ENCODE measurements at regions of chrX and their contacts with region 1.

Region 1: GRCh38 chrX:118595501-118596042 is 100.0 kb downstream of the DOCK11 start:
- DNase-seq: no peak
- H3K4me3 ChIP-seq: no peak overlapping the region
- H3K27ac ChIP-seq: no peak overlapping the region
- H3K4me1 ChIP-seq: no peaks in the 10 kb centered on the region
- H3K27me3 ChIP-seq: no peaks in the 10 kb centered on the region
- CTCF ChIP-seq: no peak
- EP300 ChIP-seq: no peak
- POLR2A ChIP-seq: no peak

Region 2: GRCh38 chrX:117510453-117510852 is 1085.1 kb before region 1 on chrX:
- intact Hi-C with region 1: no loop called
- DNase-seq: peak in 1 of 2 donors; percentile 7
- H3K4me3 ChIP-seq: no peak overlapping the region
- H3K27ac ChIP-seq: no peak overlapping the region
- H3K4me1 ChIP-seq: no peaks in the 10 kb centered on the region
- H3K27me3 ChIP-seq: no peaks in the 10 kb centered on the region
- CTCF ChIP-seq: no peak
- EP300 ChIP-seq: no peak
- POLR2A ChIP-seq: no peak

Region 3: GRCh38 chrX:118459494-118459893 is 136.1 kb before region 1 on chrX:
- intact Hi-C with region 1: loop called (anchors 10 kb)
- DNase-seq: peak in 1 of 2 donors; percentile 68
- H3K4me3 ChIP-seq: no peak overlapping the region
- H3K27ac ChIP-seq: no peak overlapping the region
- H3K4me1 ChIP-seq: no peaks in the 10 kb centered on the region
- H3K27me3 ChIP-seq: no peaks in the 10 kb centered on the region
- CTCF ChIP-seq: peak in 4 of 7 experiments; percentile 12 to 44 (median 38)
- EP300 ChIP-seq: no peak
- POLR2A ChIP-seq: no peak

Region 4: DNA sequence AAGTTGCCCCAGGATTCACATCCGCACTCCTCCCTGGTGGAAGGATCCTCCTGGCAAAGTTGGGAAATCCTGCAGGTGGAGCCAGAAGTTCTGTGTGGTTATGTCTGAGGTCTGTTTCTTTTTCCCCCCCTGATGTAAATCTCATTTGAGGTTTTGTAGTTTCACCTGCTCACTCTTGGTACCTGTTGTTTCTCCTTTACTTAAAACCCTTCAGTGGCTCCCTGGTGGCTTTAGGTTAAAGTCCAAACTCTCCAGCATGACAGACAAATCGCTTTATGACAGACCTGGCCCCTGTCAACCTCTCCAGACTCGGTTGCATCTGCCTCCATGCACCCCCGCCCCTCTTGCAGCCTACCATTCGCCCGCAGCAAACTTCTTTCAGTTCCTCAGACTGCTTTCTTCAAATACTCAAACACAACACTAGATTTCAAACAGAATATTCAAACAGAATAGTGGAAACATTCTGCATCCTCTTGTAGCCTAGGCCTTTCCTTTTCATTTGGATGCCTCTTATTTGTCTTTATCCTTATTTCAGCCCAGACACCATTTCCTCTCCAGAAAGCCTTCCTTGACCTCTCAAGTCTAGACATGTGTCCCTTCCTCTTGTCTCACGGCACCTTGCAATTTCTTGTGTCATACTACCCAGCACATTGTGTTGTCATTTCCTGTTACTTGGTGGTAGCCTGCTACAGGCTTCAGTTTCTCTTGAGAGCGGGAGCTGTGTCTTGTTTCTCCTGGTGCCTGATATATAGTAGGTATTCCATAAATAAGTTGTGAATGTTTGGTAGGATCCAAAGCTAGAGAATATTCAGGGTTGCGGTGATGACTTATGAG is 156.6 kb after region 1 on chrX:
- intact Hi-C with region 1: no loop called
- DNase-seq: no peak
- H3K4me3 ChIP-seq: no peak overlapping the region
- H3K27ac ChIP-seq: no peak overlapping the region
- H3K4me1 ChIP-seq: peaks cover 0 to 8% (median 0%) of the 10 kb centered on the region in 4 donors
- H3K27me3 ChIP-seq: no peaks in the 10 kb centered on the region
- CTCF ChIP-seq: no peak
- EP300 ChIP-seq: no peak
- POLR2A ChIP-seq: no peak

Measured in stomach (tissue), 19 donors.